Activated CD4-positive, alpha-beta memory T cell treated with anti-CD3 and anti-CD28 coated beads for 36 hours (primary cell): ENCODE measurements at regions of chr15 and their contacts with region 1.

Region 1: DNA sequence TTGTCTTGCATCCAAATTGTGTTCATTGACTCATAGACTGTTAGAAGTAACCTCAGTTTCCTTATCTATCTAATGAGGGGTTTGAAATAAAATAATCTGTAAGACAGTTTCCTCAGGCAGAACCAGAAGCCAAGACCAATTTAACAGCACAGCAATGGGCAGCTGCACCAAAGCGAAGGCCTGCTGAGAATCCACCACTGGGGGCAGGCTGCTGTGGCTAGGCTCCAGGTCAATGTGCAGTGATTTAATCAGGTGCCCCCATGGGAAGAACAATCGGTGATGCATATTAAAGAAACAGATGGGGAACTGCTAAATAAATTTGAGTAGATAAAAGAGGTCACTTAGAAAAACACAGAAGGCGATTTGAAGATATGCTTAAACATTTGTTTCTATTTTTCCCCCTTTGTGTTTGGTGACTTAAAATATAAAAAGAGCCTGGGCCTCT is 28.0 kb upstream of the TMOD3 start:
- DNase-seq: no peak
- H3K4me3 Mint-ChIP-seq: no peak overlapping the region
- H3K27ac Mint-ChIP-seq: no peak overlapping the region
- H3K4me1 Mint-ChIP-seq: no peaks in the 10 kb centered on the region
- H3K27me3 Mint-ChIP-seq: no peaks in the 10 kb centered on the region

Region 2: GRCh38 chr15:51600114-51600513 is 201.3 kb before region 1 on chr15:
- CTCF ChIA-PET with region 1: no interaction called
- POLR2A ChIA-PET with region 1: no interaction called
- intact Hi-C with region 1: no loop called
- DNase-seq: peak; percentile 12
- H3K4me3 Mint-ChIP-seq: no peak overlapping the region
- H3K27ac Mint-ChIP-seq: no peak overlapping the region
- H3K4me1 Mint-ChIP-seq: peaks cover 2% of the 10 kb centered on the region
- H3K27me3 Mint-ChIP-seq: no peaks in the 10 kb centered on the region

Region 3: DNA sequence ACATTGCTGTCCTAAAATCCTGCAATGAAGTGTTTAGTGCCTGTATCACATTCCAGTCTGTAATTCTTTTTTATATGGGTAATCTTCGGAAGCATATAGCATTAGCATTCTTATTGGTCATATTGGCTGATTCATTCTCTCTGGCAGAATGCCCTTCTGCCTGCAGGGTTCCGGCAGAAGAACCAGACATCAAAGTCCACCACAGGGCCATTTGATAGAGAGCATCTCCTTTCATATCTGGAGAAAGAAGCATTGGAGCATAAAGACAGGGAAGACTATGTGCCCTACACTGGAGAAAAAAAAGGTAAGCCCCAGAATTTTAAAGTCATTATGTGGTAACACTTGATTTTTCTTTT is 67.6 kb after region 1 on chr15:
- CTCF ChIA-PET with region 1: no interaction called
- POLR2A ChIA-PET with region 1: no interaction called
- intact Hi-C with region 1: loop called (anchors 10 kb)
- DNase-seq: no peak
- H3K4me3 Mint-ChIP-seq: no peak overlapping the region
- H3K27ac Mint-ChIP-seq: no peak overlapping the region
- H3K4me1 Mint-ChIP-seq: peaks cover 16% of the 10 kb centered on the region
- H3K27me3 Mint-ChIP-seq: no peaks in the 10 kb centered on the region